Activated naive CD4-positive, alpha-beta T cell treated with anti-CD3 and anti-CD28 coated beads for 36 hours (primary cell): ENCODE measurements at regions of chr15 and their contacts with region 1.

Region 1: DNA sequence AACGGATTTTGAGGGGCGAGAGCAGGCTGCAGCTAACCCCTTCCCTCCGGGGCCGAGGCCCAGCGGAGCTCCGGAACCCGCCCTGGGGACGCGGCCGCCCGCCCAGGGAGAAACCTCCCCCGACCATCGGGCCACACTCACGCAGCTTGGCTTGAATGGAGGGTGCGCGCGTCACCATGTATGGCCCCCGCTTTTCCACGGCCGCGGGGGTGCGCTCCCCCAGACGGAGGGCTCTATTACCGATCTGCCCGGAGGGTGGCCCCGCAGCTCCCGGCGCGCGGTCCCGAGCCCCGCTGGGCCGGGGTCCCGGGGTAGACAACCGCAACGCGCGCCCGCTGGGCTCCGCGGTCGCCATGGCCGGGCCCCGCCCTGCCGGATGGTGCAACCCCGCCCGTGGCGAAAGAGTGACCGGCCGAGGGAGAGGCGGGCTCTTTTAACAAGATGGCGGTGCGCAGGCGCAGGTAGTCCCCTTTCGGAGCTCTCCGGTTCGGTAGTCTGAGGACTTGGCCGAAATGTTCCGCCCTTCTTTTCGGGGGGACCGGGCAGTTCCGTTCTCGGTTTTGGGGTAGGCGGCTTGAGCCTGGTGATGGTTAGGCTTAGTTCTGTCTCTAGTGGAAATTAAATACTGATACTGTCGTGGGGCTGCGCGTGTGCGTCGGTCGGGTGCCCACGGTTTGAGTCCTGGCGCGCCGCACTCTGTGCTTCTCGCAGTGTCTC is at the start of gene FAM219B:
- DNase-seq: peak; percentile 88
- H3K4me3 Mint-ChIP-seq: peak within 1 kb of the TSS; percentile 89
- H3K27ac Mint-ChIP-seq: peak within 1 kb of the TSS; percentile 92
- H3K4me1 Mint-ChIP-seq: peaks cover 28% of the 10 kb centered on the region
- H3K27me3 Mint-ChIP-seq: no peaks in the 10 kb centered on the region
- total RNA-seq, gene FAM219B: 60.3 to 63.0 TPM

Region 2: GRCh38 chr15:74635228-74635627 is 271.4 kb before region 1 on chr15:
- CTCF ChIA-PET with region 1: interaction called, 5 read pairs
- intact Hi-C with region 1: loop called (anchors 1 kb)
- DNase-seq: peak; percentile 86
- H3K4me3 Mint-ChIP-seq: no peak overlapping the region
- H3K27ac Mint-ChIP-seq: no peak overlapping the region
- H3K4me1 Mint-ChIP-seq: no peaks in the 10 kb centered on the region
- H3K27me3 Mint-ChIP-seq: no peaks in the 10 kb centered on the region

Region 3: DNA sequence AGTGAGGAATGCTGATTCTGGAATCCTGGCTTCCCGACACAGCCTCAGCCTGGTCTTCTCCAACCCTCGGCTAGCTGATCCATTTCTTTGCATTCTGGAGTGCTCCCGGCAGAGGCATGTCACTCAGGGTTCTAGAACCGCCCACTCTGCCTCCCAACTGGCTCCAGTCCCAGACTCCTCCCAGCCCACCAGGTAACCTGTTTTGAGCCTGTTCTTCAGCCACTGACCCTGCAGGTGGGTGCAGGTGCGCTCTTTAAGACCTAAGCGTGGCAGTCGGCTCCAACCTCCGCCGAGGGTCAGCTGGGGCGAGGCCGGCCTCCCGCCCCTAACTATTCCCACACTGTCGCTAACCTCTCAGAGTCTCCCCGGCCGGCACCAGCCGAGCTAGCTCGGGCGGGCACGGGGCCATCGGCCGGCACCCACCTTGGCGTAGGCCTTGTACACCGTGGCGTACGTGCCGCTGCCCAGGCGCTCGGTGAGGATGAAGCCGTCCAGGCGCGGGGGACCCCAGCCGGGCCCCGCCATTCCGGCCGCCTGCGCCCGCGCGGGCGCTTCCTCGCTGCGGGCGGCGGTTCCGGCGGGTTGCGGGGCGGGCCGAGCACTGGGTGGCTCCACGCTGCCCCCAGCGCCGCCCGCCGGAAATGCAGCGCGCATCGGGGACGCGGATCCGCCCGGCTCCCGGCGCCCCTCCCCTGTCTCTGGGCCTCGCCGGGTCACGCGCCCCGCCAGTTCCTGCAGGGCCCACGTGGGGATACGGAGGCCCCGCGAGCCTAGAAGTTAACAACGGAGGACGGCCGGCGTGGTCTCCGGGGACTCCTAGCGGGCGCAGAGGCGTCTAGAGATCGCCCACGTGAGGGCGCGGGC is 63.8 kb before region 1 on chr15 and contains the start of gene ULK3:
- CTCF ChIA-PET with region 1: interaction called, 7 read pairs
- intact Hi-C with region 1: loop called (anchors 1 kb)
- DNase-seq: peak; percentile 93
- H3K4me3 Mint-ChIP-seq: peak within 1 kb of the TSS; percentile 86
- H3K27ac Mint-ChIP-seq: peak within 1 kb of the TSS; percentile 89
- H3K4me1 Mint-ChIP-seq: peaks cover 44% of the 10 kb centered on the region
- H3K27me3 Mint-ChIP-seq: no peaks in the 10 kb centered on the region
- total RNA-seq, gene ULK3: 58.9 to 69.2 TPM

Region 4: DNA sequence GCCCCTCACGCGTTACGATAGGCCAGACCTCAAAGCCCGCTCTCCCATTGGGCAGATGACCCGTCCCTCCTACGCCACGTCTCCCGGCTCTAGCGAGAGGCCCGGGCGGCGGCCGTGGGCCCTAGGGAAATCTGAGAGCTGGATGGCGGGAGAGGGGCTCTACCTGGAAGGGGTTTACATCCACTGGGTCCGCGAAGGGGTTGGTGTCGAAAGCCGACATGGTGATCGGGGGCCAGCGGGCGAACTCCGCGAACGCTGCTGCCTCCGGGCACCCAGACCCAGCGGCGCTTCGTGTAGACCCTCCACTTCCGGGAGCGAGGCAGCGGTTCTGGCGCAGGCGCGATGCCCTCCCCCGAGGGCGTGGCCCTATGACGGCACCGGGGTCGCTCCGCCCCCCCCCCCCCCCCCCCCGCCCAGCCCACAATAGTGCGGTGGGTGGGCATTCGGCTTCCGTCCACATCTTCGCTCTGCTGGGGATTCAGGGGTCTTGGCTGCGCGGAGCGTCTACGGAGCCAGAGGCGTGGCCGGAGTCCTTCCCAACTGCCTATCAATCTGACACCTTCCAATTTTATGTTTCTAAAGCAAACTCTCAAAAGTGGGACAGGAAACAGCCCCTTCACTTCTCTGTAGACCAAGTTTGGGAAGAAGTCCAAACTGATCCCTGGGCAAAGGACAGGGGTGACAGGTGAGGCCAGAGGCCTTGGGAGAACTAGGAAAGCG is 33.4 kb before region 1 on chr15 and contains the start of gene SCAMP2:
- CTCF ChIA-PET with region 1: interaction called, 23 read pairs
- intact Hi-C with region 1: loop called (anchors 2 kb)
- DNase-seq: peak; percentile 92
- H3K4me3 Mint-ChIP-seq: peak within 1 kb of the TSS; percentile 98
- H3K27ac Mint-ChIP-seq: peak within 1 kb of the TSS; percentile 92
- H3K4me1 Mint-ChIP-seq: peaks cover 42% of the 10 kb centered on the region
- H3K27me3 Mint-ChIP-seq: no peaks in the 10 kb centered on the region
- total RNA-seq, gene SCAMP2: 60.6 TPM

Region 5: GRCh38 chr15:74889883-74890664 is 16.5 kb before region 1 on chr15 and contains the start of gene MPI:
- CTCF ChIA-PET with region 1: interaction called, 26 read pairs
- intact Hi-C with region 1: loop called (anchors 2 kb)
- DNase-seq: peak; percentile 93
- H3K4me3 Mint-ChIP-seq: peak within 1 kb of the TSS; percentile 94
- H3K27ac Mint-ChIP-seq: peak within 1 kb of the TSS; percentile 92
- H3K4me1 Mint-ChIP-seq: peaks cover 43% of the 10 kb centered on the region
- H3K27me3 Mint-ChIP-seq: no peaks in the 10 kb centered on the region
- total RNA-seq, gene MPI: 55.2 to 56.1 TPM

Region 6: DNA sequence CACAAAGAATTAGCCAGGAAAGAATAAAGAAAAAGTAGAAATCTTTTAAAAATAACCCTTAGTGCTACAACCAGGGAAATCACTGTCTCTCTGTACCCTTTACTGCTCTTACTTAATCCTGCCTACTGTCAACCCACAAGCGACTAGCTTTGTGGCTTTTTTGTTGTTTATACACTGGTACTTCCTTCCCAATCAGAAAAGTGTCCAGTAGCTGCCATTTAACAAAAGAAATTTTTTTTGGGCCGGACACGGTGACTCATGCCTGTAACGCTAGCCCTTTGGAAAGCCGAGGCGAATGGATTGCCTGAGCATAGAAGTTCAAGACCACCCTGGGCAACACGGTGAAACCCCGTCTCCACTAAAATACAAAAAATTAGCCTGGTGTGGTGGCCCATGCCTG is 13.9 kb after region 1 on chr15:
- CTCF ChIA-PET with region 1: interaction called, 13 read pairs
- intact Hi-C with region 1: no loop called
- DNase-seq: no peak
- H3K4me3 Mint-ChIP-seq: no peak overlapping the region
- H3K27ac Mint-ChIP-seq: no peak overlapping the region
- H3K4me1 Mint-ChIP-seq: peaks cover 2% of the 10 kb centered on the region
- H3K27me3 Mint-ChIP-seq: no peaks in the 10 kb centered on the region

Region 7: DNA sequence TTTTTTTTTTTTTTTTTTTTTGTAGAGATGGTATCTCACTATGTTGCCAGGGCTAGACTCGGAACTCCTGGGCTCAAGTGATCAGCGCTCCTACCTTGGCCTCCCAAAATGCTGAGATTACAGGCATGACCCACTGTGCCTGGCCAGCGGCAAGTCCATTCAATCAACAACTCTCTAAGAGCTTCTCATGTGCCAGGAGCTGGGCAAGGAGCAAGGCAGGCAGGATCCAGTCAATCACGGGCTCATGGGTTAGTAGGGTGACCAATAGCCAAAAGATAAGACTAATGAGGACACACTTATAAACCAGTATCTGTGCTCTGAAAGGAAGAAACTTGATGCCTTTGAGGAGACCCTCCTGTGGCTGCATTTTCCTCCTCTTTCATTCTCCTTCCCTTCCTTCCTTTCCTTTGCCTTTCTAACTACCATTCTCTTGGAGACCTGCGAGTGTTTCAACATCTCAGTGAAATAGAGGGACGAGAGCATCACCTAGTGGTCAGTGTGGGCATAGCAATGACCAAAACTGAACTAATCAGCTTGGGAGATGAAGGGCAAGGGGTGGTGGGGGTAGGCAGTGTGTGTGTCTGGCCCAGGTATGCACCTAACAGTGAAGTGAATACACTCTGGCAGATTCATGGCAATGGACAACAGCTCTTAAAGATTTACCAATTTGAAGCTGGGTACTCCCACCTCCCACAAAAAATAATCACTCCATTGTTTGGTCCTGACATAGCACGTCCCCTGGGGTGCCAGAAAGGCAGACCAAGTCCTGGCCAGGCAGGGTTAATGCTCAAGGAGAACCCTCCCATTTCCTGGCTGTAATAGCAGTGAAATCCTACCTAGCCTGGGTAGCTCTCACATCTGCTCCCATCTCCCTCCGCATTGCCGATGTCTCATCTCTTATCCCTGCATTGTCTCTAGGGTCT is 43.7 kb after region 1 on chr15:
- CTCF ChIA-PET with region 1: interaction called, 15 read pairs
- intact Hi-C with region 1: loop called (anchors 2 kb)
- DNase-seq: peak; percentile 92
- H3K4me3 Mint-ChIP-seq: no peak overlapping the region
- H3K27ac Mint-ChIP-seq: no peak overlapping the region
- H3K4me1 Mint-ChIP-seq: peaks cover 10% of the 10 kb centered on the region
- H3K27me3 Mint-ChIP-seq: no peaks in the 10 kb centered on the region

Region 8: DNA sequence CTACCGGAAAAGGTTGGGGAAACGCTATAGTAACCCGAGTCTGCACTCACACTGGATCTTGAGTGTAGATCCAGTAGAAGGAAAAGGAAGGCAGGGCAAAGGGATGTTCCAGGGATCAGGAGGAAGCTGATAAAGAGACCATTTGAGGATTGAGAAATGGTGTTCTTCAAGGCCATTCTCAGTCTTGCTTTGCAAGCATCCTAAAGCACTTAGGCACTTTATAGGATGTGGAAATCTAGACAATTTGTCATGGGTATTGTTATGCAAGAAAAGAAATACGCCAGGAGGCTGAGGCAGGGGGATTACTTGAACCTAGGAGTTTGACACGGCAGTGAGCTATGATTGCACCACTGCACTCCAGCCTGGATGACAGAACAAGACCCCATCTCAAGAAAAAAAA is 75.6 kb after region 1 on chr15:
- CTCF ChIA-PET with region 1: no interaction called
- intact Hi-C with region 1: no loop called
- DNase-seq: no peak
- H3K4me3 Mint-ChIP-seq: no peak overlapping the region
- H3K27ac Mint-ChIP-seq: no peak overlapping the region
- H3K4me1 Mint-ChIP-seq: peaks cover 13% of the 10 kb centered on the region
- H3K27me3 Mint-ChIP-seq: peaks cover 10% of the 10 kb centered on the region